Activated T-helper 1 cell treated with anti-CD3 and anti-CD28 coated beads, Interleukin-12 subunit alpha, Interleukin-12 subunit beta, Interleukin-2, Interleukin-4 antibody, amounts not matched to agents 30 ng/mL and 10 ng/mL and 1 ng/mL, durations not matched to agents 14 hours and 24 hours and 36 hours (primary cell): ENCODE measurements at regions of chr2 and their contacts with region 1.

Region 1: DNA sequence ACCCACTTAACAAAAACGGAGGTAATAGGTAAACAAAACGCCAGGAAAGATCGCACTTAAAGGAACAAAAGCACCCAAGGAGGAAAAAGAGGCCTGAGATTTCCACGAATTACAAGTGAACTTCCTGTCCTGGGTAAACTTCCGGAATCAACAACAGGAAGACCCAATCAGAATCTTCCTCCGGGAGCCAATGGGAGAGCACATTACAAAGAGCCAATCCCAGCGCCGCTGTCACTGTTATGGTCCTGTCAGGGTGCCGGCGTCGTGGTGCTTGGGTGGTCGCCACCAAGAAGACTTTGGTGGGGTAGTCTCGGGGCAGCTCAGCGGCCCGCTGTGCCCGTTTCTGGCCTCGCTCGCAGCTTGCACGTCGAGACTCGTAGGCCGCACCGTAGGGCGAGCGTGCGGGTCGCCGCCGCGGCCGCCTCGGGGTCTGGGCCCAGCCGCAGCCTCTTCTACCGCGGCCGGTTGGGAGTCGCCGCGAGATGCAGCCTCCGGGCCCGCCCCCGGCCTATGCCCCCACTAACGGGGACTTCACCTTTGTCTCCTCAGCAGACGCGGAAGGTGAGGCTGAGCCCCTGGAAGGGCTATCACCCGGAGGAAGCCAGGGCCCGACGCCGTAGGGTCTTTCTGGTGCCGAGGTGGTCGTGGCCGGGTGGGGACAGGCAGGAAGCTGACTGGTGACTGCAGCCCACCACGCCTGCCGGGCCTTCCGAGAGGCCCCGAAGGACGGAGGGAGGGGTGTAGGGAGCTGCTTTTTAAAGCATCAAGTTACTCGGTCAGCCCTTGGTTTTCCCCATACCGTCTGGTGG is at the start of gene YIPF4:
- DNase-seq: peak; percentile 84
- H3K4me3 Mint-ChIP-seq: peak within 1 kb of the TSS; percentile 89
- H3K27ac Mint-ChIP-seq: peak within 1 kb of the TSS; percentile 85
- H3K4me1 Mint-ChIP-seq: peaks cover 13% of the 10 kb centered on the region
- H3K27me3 Mint-ChIP-seq: peaks cover 4% of the 10 kb centered on the region
- total RNA-seq, gene YIPF4: 39.4 and 42.9 TPM in 2 replicates

Region 2: GRCh38 chr2:32039447-32040219 is 238.2 kb before region 1 on chr2 and contains the start of gene DPY30:
- intact Hi-C with region 1: loop called (anchors 5 kb)
- DNase-seq: peak; percentile 86
- H3K4me3 Mint-ChIP-seq: peak within 1 kb of the TSS; percentile 93
- H3K27ac Mint-ChIP-seq: peak within 1 kb of the TSS; percentile 93
- H3K4me1 Mint-ChIP-seq: peaks cover 17% of the 10 kb centered on the region
- H3K27me3 Mint-ChIP-seq: peaks cover 1% of the 10 kb centered on the region
- total RNA-seq, gene DPY30: 64.6 and 72.5 TPM in 2 replicates

Region 3: DNA sequence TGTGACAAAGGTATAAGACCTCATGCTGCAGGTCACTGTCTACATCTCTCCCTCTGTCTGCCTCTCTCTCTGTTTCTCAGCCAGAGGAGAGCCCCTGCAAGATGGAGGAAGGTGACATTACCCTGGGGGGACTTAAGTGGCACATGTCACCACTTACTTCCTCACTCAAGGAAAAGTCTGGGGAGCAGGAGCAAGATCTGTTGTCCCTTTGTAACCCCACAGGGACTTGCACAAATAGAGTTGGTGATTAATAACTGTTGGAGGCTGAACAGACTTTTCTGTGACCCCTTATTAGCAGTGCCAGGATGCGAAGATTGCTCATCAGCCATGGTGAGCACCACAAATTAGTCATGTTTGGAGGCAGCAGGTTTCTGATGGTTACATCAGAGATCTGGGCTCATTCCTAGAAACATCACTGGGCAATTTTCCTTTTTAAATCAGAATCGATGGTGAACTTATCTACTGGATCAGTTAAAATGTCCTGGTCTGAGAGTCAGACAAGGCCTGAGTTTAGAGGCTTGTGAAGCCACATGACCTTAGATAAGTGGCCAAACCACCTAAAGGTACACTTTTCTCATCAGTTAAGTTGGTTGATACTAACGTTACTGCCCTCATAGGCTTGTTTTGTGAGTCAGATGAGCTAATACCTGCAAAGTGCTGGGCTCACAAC is 587.7 kb after region 1 on chr2:
- intact Hi-C with region 1: no loop called
- DNase-seq: no peak
- H3K4me3 Mint-ChIP-seq: no peak overlapping the region
- H3K27ac Mint-ChIP-seq: no peak overlapping the region
- H3K4me1 Mint-ChIP-seq: no peaks in the 10 kb centered on the region
- H3K27me3 Mint-ChIP-seq: peaks cover 14% of the 10 kb centered on the region